ENCODE measurements at regions of chr11 and their contacts with region 1.

Region 1: DNA sequence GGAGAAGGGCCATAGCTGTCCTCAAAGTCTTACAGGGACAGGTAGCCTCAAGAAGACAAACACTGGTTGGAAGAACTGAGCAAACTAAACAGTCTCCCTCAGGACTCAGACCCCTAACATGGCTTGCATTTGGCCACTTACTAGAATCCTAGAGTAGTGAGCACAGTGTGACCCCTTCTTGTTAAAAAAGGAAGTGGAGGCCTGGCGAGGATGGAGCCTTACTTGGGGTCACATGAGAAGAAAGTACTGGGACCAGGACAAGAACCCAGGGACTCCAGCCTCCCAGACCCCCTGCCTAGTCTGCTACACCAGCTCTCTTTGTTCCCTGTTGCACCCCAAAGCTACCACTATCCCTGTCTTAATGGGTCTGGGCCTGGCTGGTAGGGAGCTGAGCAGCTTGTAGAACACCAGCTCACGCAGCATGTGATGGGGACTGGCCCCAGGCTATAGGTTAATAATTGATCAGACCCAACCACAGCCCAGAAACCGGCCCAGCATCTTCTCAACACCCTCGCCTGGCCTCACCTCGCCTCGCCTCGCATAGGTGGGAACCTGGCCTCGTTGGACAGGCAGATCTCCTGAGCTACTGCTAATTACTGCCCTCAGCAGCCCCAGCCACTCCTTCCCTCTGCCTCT is 17.6 kb downstream of the DGAT2 start:
- DNase-seq: no peak
- H3K4me3 ChIP-seq: no peak overlapping the region
- H3K27ac ChIP-seq: no peak overlapping the region
- H3K4me1 ChIP-seq: no peaks in the 10 kb centered on the region
- H3K27me3 ChIP-seq: no peaks in the 10 kb centered on the region
- CTCF ChIP-seq: no peak

Region 2: DNA sequence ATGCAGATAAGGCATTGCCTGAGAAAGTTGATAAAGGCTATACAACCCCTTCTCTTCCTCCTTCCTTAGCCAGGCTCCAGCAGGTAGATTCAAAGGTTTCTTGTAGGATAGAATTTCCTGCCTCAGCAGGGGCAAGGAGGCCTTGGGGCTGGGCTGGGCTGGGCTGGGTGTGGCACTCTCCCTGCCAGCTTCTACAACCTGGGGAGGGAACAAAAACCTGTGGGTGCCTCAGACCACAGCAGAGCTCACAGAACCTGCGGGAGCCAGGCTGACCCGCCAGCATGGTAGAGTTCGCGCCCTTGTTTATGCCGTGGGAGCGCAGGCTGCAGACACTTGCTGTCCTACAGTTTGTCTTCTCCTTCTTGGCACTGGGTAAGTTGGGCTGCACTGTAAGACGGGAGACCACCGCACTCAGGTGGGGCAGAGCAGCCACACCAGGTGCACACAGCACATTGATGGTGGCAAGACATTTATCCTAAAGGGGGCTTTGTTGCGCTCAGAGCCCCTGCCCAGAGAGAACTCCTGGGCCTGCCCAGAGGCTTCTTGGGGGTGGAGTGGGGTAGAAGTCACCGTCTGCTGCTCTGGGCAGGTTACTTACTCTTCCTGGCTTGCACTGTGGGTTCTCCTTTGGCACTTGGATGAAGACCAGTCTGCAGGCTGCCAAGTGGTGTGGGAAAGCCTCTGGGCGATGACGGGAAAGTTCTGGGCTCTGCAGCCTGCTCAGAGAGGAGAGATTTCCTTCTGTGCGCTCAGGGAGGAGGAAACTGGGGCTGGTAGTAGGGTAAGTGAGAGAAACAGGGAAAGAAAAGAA is 68.4 kb before region 1 on chr11 and contains the start of gene MOGAT2:
- intact Hi-C with region 1: loop called (anchors 10 kb)
- DNase-seq: no peak
- H3K4me3 ChIP-seq: no peak within 1 kb of the TSS
- H3K27ac ChIP-seq: no peak within 1 kb of the TSS
- H3K4me1 ChIP-seq: peaks cover 0 to 18% (median 4%) of the 10 kb centered on the region in 4 donors
- H3K27me3 ChIP-seq: no peaks in the 10 kb centered on the region
- CTCF ChIP-seq: no peak

Region 3: GRCh38 chr11:75743711-75744563 is 42.3 kb before region 1 on chr11:
- intact Hi-C with region 1: no loop called
- DNase-seq: peak in 1 of 2 donors; percentile 6
- H3K4me3 ChIP-seq: no peak overlapping the region
- H3K27ac ChIP-seq: no peak overlapping the region
- H3K4me1 ChIP-seq: no peaks in the 10 kb centered on the region
- H3K27me3 ChIP-seq: peaks cover 0 to 21% of the 10 kb centered on the region in 2 donors
- CTCF ChIP-seq: no peak